Mammary epithelial cell (primary cell): ENCODE measurements at regions of chr5 and their contacts with region 1.

Region 1: GRCh38 chr5:141040771-141041426 is 10.3 kb upstream of the PCDHB1 start:
- DNase-seq: peak; percentile 89
- H3K4me3 ChIP-seq: peak overlapping the region; percentile 42 to 53 (median 48)
- H3K27ac ChIP-seq: no peak overlapping the region
- H3K4me1 ChIP-seq: peaks cover 12% of the 10 kb centered on the region
- H3K27me3 ChIP-seq: no peaks in the 10 kb centered on the region
- CTCF ChIP-seq: peak; percentile 55 to 81

Region 2: GRCh38 chr5:140821375-140822280 is 219.3 kb before region 1 on chr5 and contains the start of gene PCDHA5:
- CTCF ChIA-PET with region 1: interaction called, 3 read pairs
- dilution Hi-C with region 1: no loop called
- in situ Hi-C with region 1: no loop called
- intact Hi-C with region 1: loop called (anchors 1 kb)
- DNase-seq: no peak
- H3K4me3 ChIP-seq: no peak within 1 kb of the TSS
- H3K27ac ChIP-seq: no peak within 1 kb of the TSS
- H3K4me1 ChIP-seq: no peaks in the 10 kb centered on the region
- H3K27me3 ChIP-seq: no peaks in the 10 kb centered on the region
- CTCF ChIP-seq: peak; percentile 43 to 55
- total RNA-seq, gene PCDHA5: 0.17 to 0.38 TPM

Region 3: DNA sequence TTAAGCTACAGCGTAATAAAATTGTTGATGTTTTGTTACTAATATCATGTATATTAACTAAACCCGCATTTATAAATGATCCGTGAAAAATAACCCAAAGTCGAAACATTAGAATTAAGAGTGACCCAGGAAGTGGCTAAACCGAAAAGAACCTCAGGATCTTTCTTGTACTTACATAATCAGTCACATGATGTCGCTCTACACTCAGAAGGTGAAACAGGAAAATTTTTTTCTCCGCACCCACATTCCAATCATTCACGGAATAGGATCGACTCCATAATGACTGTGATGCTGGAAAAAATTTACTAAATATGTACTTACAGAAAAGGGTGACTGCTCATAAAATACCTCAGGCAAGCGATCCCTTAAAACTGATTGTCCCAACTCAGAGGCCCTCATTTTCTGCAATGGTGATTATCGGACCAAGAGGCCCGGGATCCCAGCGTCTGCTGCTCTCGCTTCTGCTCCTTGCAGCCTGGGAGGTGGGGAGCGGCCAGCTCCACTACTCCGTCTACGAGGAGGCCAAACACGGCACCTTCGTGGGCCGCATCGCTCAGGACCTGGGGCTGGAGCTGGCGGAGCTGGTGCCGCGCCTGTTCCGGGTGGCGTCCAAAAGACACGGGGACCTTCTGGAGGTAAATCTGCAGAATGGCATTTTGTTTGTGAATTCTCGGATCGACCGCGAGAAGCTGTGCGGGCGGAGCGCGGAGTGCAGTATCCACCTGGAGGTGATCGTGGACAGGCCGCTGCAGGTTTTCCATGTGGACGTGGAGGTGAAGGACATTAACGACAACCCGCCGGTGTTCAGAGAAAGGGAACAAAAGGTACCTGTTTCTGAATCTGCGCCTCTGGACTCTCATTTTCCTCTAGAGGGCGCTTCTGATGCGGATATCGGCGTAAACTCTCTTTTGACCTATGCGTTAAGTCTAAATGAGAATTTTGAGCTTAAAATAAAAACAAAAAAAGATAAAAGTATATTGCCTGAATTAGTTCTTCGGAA is 165.5 kb before region 1 on chr5 and contains the start of gene PCDHA12:
- CTCF ChIA-PET with region 1: no interaction called
- dilution Hi-C with region 1: no loop called
- in situ Hi-C with region 1: loop called (anchors 5 kb)
- intact Hi-C with region 1: loop called (anchors 1 kb)
- DNase-seq: no peak
- H3K4me3 ChIP-seq: no peak within 1 kb of the TSS
- H3K27ac ChIP-seq: no peak within 1 kb of the TSS
- H3K4me1 ChIP-seq: no peaks in the 10 kb centered on the region
- H3K27me3 ChIP-seq: no peaks in the 10 kb centered on the region
- CTCF ChIP-seq: peak in 1 of 2 donors; percentile 23
- total RNA-seq, gene PCDHA12: 0.45 to 6.8 TPM

Region 4: DNA sequence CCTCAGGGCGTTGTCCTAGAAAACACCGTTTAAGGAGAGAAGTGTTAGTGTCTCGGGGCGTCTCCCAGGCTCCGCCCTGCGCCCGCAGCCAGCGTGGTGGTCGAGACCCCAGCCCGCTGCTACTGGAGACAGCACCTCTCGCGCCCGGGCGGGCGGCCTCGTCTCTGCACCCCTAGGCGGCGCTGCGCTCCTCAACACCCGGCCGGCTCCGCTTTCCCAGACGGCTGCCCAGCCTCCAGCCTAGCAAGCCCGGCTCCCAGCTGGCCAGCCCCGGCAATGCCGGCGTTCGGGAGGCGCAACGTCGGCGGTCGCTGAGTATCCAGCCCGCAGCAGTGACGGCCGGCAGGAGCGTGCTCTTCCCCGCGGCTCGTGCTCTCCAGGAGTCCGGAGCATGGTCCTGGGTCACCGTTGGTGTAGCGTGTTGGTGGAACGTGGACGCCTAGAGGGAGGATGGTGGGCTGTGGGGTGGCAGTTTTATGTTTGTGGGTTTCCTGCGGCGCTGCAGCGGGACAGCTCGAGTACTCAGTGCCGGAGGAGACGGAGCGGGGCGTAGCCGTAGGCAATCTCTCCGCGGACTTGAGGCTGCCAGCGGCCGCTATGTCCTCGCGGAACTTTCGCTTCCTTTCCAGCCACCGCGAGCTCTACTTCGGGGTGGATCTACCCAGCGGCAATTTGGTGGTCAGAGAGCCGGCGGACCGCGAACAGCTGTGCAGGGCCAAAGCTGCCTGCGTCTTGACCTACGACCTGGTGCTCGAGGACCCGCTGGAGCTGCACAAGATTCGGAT is 114.3 kb before region 1 on chr5:
- CTCF ChIA-PET with region 1: interaction called, 42 read pairs
- dilution Hi-C with region 1: no loop called
- in situ Hi-C with region 1: loop called in 1 of 2 experiments (anchors 5 kb)
- intact Hi-C with region 1: loop called (anchors 1 kb)
- DNase-seq: peak; percentile 70
- H3K4me3 ChIP-seq: peak overlapping the region; percentile 75 to 80 (median 77)
- H3K27ac ChIP-seq: no peak overlapping the region
- H3K4me1 ChIP-seq: peaks cover 18% of the 10 kb centered on the region
- H3K27me3 ChIP-seq: peaks cover 3% of the 10 kb centered on the region
- CTCF ChIP-seq: peak; percentile 80 to 99

Region 5: GRCh38 chr5:141001854-141002604 is 38.9 kb before region 1 on chr5:
- CTCF ChIA-PET with region 1: interaction called, 3 read pairs
- dilution Hi-C with region 1: no loop called
- in situ Hi-C with region 1: no loop called
- intact Hi-C with region 1: loop called (anchors 1 kb)
- DNase-seq: peak; percentile 52
- H3K4me3 ChIP-seq: peak overlapping the region; percentile 39 to 56 (median 51)
- H3K27ac ChIP-seq: peak overlapping the region; percentile 93
- H3K4me1 ChIP-seq: peaks cover 38% of the 10 kb centered on the region
- H3K27me3 ChIP-seq: no peaks in the 10 kb centered on the region
- CTCF ChIP-seq: no peak